Activated B cell treated with CpG ODN at 0.5 μM for 24 hours (primary cell): ENCODE measurements at regions of chr19 and their contacts with region 1.

Region 1: GRCh38 chr19:12796146-12797071 is 5.1 kb downstream of the JUNB start:
- DNase-seq: peak; percentile 63
- ATAC-seq: no peak
- H3K4me3 Mint-ChIP-seq: peak overlapping the region; percentile 81
- H3K27ac Mint-ChIP-seq: peak overlapping the region; percentile 80
- H3K4me1 Mint-ChIP-seq: peaks cover 34% of the 10 kb centered on the region
- H3K27me3 Mint-ChIP-seq: no peaks in the 10 kb centered on the region
- CTCF ChIP-seq: peak; percentile 37

Region 2: GRCh38 chr19:12716861-12717260 is 79.5 kb before region 1 on chr19:
- CTCF ChIA-PET with region 1: interaction called, 3 read pairs
- POLR2A ChIA-PET with region 1: interaction called, 3 read pairs
- intact Hi-C with region 1: loop called (anchors 1 kb)
- DNase-seq: no peak
- ATAC-seq: peak; percentile 75
- H3K4me3 Mint-ChIP-seq: no peak overlapping the region
- H3K27ac Mint-ChIP-seq: no peak overlapping the region
- H3K4me1 Mint-ChIP-seq: peaks cover 24% of the 10 kb centered on the region
- H3K27me3 Mint-ChIP-seq: no peaks in the 10 kb centered on the region
- CTCF ChIP-seq: no peak

Region 3: DNA sequence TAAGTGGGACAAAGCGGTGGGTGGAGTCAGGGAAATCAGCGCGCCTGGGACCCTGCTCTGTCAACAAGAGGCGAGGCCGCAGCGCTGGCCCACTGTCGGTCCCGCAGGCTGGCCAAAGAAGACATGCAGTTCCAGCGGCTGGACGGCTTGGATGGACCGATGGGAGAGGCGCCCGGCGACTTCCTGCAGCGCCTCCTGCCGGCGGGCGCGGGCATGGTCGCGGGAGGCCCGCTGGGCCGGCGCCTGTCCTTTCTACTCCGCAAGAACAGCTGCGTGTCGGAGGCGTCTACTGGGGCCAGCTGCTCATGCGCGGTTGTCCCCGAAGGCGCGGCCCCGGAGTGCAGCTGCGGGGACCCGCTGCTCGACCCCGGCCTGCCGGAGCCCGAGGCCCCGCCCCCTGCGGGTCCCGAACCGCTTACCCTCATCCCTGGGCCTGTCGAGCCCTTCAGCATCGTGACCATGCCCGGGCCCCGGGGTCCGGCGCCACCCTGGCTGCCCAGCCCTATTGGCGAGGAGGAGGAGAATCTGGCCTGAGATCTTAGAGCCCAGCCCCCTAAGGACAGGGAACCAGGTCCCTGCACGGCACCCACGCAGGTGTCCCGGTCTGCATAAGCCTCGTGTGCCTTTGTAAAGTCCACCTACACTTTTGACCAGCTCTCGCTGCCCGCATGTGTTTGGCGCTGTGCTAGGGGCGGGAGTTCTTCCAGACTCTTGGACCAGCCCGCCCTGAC is 38.7 kb before region 1 on chr19:
- CTCF ChIA-PET with region 1: interaction called, 280 read pairs
- POLR2A ChIA-PET with region 1: interaction called, 10 read pairs
- intact Hi-C with region 1: loop called (anchors 1 kb)
- DNase-seq: peak; percentile 69
- ATAC-seq: peak; percentile 75
- H3K4me3 Mint-ChIP-seq: no peak overlapping the region
- H3K27ac Mint-ChIP-seq: no peak overlapping the region
- H3K4me1 Mint-ChIP-seq: peaks cover 10% of the 10 kb centered on the region
- H3K27me3 Mint-ChIP-seq: peaks cover 22% of the 10 kb centered on the region
- CTCF ChIP-seq: peak; percentile 70

Region 4: GRCh38 chr19:12766051-12766521 is 30.3 kb before region 1 on chr19:
- CTCF ChIA-PET with region 1: interaction called, 280 read pairs
- POLR2A ChIA-PET with region 1: interaction called, 80 read pairs
- intact Hi-C with region 1: loop called (anchors 1 kb)
- DNase-seq: peak; percentile 84
- ATAC-seq: peak; percentile 68
- H3K4me3 Mint-ChIP-seq: peak overlapping the region; percentile 32
- H3K27ac Mint-ChIP-seq: no peak overlapping the region
- H3K4me1 Mint-ChIP-seq: peaks cover 12% of the 10 kb centered on the region
- H3K27me3 Mint-ChIP-seq: no peaks in the 10 kb centered on the region
- CTCF ChIP-seq: peak; percentile 34

Region 5: GRCh38 chr19:12777217-12778016 is 19.0 kb before region 1 on chr19:
- CTCF ChIA-PET with region 1: interaction called, 278 read pairs
- POLR2A ChIA-PET with region 1: interaction called, 909 read pairs
- intact Hi-C with region 1: loop called (anchors 1 kb)
- DNase-seq: peak; percentile 85
- ATAC-seq: peak; percentile 37
- H3K4me3 Mint-ChIP-seq: peak overlapping the region; percentile 83
- H3K27ac Mint-ChIP-seq: peak overlapping the region; percentile 87
- H3K4me1 Mint-ChIP-seq: peaks cover 48% of the 10 kb centered on the region
- H3K27me3 Mint-ChIP-seq: no peaks in the 10 kb centered on the region
- CTCF ChIP-seq: peak; percentile 73

Region 6: GRCh38 chr19:12847159-12848139 is 51.0 kb after region 1 on chr19:
- CTCF ChIA-PET with region 1: interaction called, 7 read pairs
- POLR2A ChIA-PET with region 1: interaction called, 7 read pairs
- intact Hi-C with region 1: loop called (anchors 1 kb)
- DNase-seq: peak; percentile 92
- ATAC-seq: peak; percentile 99
- H3K4me3 Mint-ChIP-seq: no peak overlapping the region
- H3K27ac Mint-ChIP-seq: no peak overlapping the region
- H3K4me1 Mint-ChIP-seq: peaks cover 7% of the 10 kb centered on the region
- H3K27me3 Mint-ChIP-seq: peaks cover 20% of the 10 kb centered on the region
- CTCF ChIP-seq: peak; percentile 86

Region 7: DNA sequence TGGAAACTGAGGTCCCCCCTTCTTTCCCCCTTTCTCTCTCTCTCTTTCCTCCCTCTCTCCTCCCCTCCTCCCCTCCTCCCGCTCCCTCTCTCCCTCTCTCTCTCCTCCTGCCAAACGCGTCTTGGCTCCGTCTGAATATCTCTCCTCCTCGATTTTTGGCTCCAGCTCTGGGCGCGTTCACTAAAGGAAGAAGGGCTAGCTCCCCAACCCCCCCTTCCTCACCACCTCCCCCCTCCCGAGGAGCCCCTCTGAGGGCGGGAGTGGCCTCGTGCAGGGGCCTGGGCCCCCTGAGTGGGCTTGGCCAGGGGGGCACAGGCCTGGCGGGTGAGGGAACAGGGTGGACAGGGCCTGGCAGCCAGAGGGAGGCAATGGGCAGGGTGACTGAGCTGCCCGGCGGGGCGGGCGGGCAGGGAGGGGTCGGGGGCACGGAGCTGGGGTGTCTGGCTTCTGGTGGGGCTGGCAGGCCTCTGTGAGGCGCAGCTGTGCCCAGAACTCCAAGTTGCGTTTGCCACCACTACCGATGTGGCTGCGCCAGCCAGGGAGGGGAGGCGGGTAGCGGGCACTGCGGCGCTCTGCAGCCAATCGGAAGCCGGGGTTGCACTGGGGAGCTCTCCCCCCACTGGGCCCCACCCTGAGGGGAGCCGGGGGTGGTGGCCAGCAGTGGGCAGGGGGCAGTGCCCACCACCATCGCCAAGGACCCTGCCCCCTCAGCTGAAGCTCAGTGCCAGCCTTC is 205.9 kb after region 1 on chr19:
- CTCF ChIA-PET with region 1: no interaction called
- POLR2A ChIA-PET with region 1: no interaction called
- intact Hi-C with region 1: no loop called
- DNase-seq: no peak
- ATAC-seq: no peak
- H3K4me3 Mint-ChIP-seq: no peak overlapping the region
- H3K27ac Mint-ChIP-seq: no peak overlapping the region
- H3K4me1 Mint-ChIP-seq: no peaks in the 10 kb centered on the region
- H3K27me3 Mint-ChIP-seq: peaks cover 18% of the 10 kb centered on the region
- CTCF ChIP-seq: no peak

Region 8: GRCh38 chr19:13060964-13061927 is 264.8 kb after region 1 on chr19:
- CTCF ChIA-PET with region 1: no interaction called
- POLR2A ChIA-PET with region 1: no interaction called
- intact Hi-C with region 1: no loop called
- DNase-seq: peak; percentile 74
- ATAC-seq: peak; percentile 99
- H3K4me3 Mint-ChIP-seq: peak overlapping the region; percentile 81
- H3K27ac Mint-ChIP-seq: no peak overlapping the region
- H3K4me1 Mint-ChIP-seq: peaks cover 5% of the 10 kb centered on the region
- H3K27me3 Mint-ChIP-seq: peaks cover 14% of the 10 kb centered on the region
- CTCF ChIP-seq: peak; percentile 93